AG04450 (cell line): ENCODE measurements at regions of chr9 and their contacts with region 1.

Region 1: GRCh38 chr9:94139672-94140417 is 55.6 kb downstream of the PTPDC1 start:
- DNase-seq: peak; percentile 95
- H3K4me3 ChIP-seq: peak overlapping the region; percentile 30
- H3K27ac ChIP-seq: peak overlapping the region; percentile 86
- H3K27me3 ChIP-seq: no peaks in the 10 kb centered on the region
- CTCF ChIP-seq: no peak

Region 2: DNA sequence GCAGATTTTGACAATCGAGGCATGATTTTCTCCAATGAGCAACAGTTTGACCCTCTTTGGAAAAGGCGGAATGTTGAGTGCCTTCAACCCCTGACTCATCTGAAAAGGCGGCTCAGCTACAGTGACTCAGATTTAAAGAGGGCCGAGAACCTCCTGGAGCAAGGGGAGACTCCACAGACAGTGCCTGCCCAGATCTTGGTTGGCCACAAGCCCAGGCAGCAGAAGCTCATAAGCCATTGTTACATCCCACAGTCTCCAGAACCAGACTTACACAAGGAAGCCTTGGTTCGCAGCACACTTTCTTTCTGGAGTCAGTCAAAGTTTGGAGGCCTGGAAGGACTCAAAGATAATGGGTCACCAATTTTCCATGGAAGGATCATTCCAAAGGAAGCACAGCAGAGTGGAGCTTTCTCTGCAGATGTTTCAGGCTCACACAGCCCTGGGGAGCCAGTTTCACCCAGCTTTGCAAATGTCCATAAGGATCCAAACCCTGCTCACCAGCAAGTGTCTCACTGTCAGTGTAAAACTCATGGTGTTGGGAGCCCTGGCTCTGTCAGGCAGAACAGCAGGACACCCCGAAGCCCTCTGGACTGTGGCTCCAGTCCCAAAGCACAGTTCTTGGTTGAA is 41.9 kb before region 1 on chr9:
- CTCF ChIA-PET with region 1: no interaction called
- POLR2A ChIA-PET with region 1: interaction called, 12 read pairs
- DNase-seq: peak; percentile 82
- H3K4me3 ChIP-seq: no peak overlapping the region
- H3K27ac ChIP-seq: peak overlapping the region; percentile 57
- H3K27me3 ChIP-seq: no peaks in the 10 kb centered on the region
- CTCF ChIP-seq: no peak

Region 3: GRCh38 chr9:94120854-94121376 is 18.9 kb before region 1 on chr9:
- CTCF ChIA-PET with region 1: no interaction called
- POLR2A ChIA-PET with region 1: no interaction called
- DNase-seq: no peak
- H3K4me3 ChIP-seq: no peak overlapping the region
- H3K27ac ChIP-seq: no peak overlapping the region
- H3K27me3 ChIP-seq: no peaks in the 10 kb centered on the region
- CTCF ChIP-seq: no peak

Region 4: DNA sequence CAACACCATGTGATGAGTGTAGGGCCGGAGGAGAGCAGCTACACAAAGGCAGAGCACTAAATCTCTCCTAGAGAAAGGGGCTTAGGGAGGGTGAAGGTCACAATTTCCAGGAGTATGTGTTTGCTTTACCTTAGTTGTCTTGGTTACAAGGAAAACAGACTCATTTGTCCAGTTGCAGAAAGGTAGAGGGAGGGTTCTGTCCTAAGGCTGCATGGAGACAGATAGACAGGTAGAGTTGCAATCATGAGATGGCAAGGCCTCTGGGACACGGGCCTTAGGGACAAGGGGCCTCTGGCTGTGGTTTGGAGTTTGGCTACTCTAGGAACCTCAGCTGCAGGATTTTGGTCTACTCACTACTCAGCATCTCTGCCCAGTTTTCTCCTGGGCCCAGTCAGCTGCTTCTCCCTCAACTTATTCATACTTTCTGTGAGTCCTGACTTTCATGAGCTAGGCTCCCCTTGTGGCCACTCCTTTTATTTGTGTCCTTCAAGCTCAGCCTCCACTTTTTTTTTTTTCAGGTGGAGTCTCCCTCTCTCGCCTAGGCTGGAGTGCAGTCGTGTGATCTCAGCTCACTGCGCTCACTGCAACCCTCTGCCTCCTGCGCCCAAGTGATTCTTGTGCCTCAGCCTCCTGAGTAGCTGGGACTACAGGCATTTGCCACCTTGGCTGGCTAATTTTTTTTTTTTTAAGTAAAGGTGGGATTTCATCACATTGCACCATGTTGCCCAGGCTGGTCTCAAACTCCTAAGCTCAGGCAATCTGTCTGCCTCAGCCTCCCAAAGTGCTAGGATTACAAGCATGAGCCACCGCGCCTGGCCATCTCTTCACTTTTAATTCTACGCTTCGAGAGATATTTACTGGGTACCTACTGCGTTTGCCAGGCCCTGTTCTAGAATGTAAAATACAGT is 21.0 kb after region 1 on chr9:
- CTCF ChIA-PET with region 1: interaction called, 5 read pairs
- POLR2A ChIA-PET with region 1: interaction called, 35 read pairs
- DNase-seq: no peak
- H3K4me3 ChIP-seq: no peak overlapping the region
- H3K27ac ChIP-seq: no peak overlapping the region
- H3K27me3 ChIP-seq: no peaks in the 10 kb centered on the region
- CTCF ChIP-seq: 0 out of 2 replicates have a peak, but pooled peaks have one; percentile 5

Region 5: GRCh38 chr9:94166237-94166963 is 26.6 kb after region 1 on chr9:
- CTCF ChIA-PET with region 1: interaction called, 5 read pairs
- POLR2A ChIA-PET with region 1: interaction called, 35 read pairs
- DNase-seq: peak; percentile 98
- H3K4me3 ChIP-seq: peak overlapping the region; percentile 87
- H3K27ac ChIP-seq: peak overlapping the region; percentile 94
- H3K27me3 ChIP-seq: no peaks in the 10 kb centered on the region
- CTCF ChIP-seq: no peak